Activated B cell treated with CpG ODN at 0.5 μM for 24 hours (primary cell): ENCODE measurements at regions of chr10 and their contacts with region 1.

Region 1: GRCh38 chr10:30433730-30434272 is at the start of gene MAP3K8:
- DNase-seq: peak; percentile 90
- ATAC-seq: peak; percentile 71
- H3K4me3 Mint-ChIP-seq: peak within 1 kb of the TSS; percentile 95
- H3K27ac Mint-ChIP-seq: peak within 1 kb of the TSS; percentile 94
- H3K4me1 Mint-ChIP-seq: peaks cover 71% of the 10 kb centered on the region
- H3K27me3 Mint-ChIP-seq: no peaks in the 10 kb centered on the region
- CTCF ChIP-seq: no peak
- total RNA-seq, gene MAP3K8: 141 and 160 TPM in 2 replicates

Region 2: GRCh38 chr10:30392564-30392990 is 41.2 kb before region 1 on chr10:
- CTCF ChIA-PET with region 1: interaction called, 4 read pairs
- POLR2A ChIA-PET with region 1: no interaction called
- intact Hi-C with region 1: loop called (anchors 2 kb)
- DNase-seq: peak; percentile 70
- ATAC-seq: peak; percentile 100
- H3K4me3 Mint-ChIP-seq: peak overlapping the region; percentile 20
- H3K27ac Mint-ChIP-seq: no peak overlapping the region
- H3K4me1 Mint-ChIP-seq: peaks cover 4% of the 10 kb centered on the region
- H3K27me3 Mint-ChIP-seq: peaks cover 7% of the 10 kb centered on the region
- CTCF ChIP-seq: peak; percentile 34

Region 3: GRCh38 chr10:30447125-30447799 is 13.5 kb after region 1 on chr10:
- CTCF ChIA-PET with region 1: interaction called, 4 read pairs
- POLR2A ChIA-PET with region 1: interaction called, 22 read pairs
- intact Hi-C with region 1: loop called (anchors 1 kb)
- DNase-seq: no peak
- ATAC-seq: peak; percentile 34
- H3K4me3 Mint-ChIP-seq: peak overlapping the region; percentile 24
- H3K27ac Mint-ChIP-seq: peak overlapping the region; percentile 59
- H3K4me1 Mint-ChIP-seq: peaks cover 59% of the 10 kb centered on the region
- H3K27me3 Mint-ChIP-seq: no peaks in the 10 kb centered on the region
- CTCF ChIP-seq: no peak

Region 4: GRCh38 chr10:30488316-30488715 is 54.5 kb after region 1 on chr10:
- CTCF ChIA-PET with region 1: interaction called, 5 read pairs
- POLR2A ChIA-PET with region 1: interaction called, 22 read pairs
- intact Hi-C with region 1: loop called (anchors 1 kb)
- DNase-seq: no peak
- ATAC-seq: peak; percentile 70
- H3K4me3 Mint-ChIP-seq: peak overlapping the region; percentile 66
- H3K27ac Mint-ChIP-seq: peak overlapping the region; percentile 89
- H3K4me1 Mint-ChIP-seq: peaks cover 63% of the 10 kb centered on the region
- H3K27me3 Mint-ChIP-seq: no peaks in the 10 kb centered on the region
- CTCF ChIP-seq: no peak

Region 5: GRCh38 chr10:30510169-30510930 is 76.5 kb after region 1 on chr10:
- CTCF ChIA-PET with region 1: interaction called, 3 read pairs
- POLR2A ChIA-PET with region 1: interaction called, 23 read pairs
- intact Hi-C with region 1: no loop called
- DNase-seq: no peak
- ATAC-seq: peak; percentile 96
- H3K4me3 Mint-ChIP-seq: peak overlapping the region; percentile 56
- H3K27ac Mint-ChIP-seq: peak overlapping the region; percentile 81
- H3K4me1 Mint-ChIP-seq: peaks cover 42% of the 10 kb centered on the region
- H3K27me3 Mint-ChIP-seq: no peaks in the 10 kb centered on the region
- CTCF ChIP-seq: no peak

Region 6: DNA sequence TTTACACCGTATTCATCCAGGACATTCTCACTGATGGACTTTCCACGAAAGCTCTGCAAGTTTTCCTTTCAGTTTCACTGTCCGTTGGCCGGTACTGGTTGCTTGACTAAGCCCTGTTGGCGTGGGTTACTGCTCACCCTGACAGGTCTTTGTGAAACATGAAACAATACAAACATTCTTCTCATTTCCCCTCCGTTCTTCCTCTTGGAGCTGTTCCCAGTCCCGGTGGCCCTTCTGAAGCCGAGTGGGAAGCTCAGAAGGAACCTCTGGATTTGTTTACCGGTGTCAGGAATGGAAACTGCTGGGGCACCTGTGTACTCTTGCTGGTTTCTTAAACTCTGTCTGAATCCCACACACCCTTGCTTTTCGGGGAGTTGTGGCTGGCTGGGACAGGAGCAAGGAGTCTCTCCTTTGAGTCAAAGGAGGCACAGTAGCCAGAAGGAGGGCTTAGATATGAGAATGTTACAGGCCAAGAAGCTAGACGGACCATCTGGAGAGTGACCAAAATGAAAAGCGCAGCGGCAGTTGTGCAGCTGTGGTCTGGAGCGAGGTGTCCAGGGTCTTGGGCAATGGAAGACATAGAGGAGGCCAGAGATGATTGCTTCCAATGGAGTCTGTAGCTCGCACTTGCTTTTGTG is 150.1 kb after region 1 on chr10:
- CTCF ChIA-PET with region 1: interaction called, 4 read pairs
- POLR2A ChIA-PET with region 1: interaction called, 3 read pairs
- intact Hi-C with region 1: loop called (anchors 1 kb)
- DNase-seq: no peak
- ATAC-seq: no peak
- H3K4me3 Mint-ChIP-seq: peak overlapping the region; percentile 67
- H3K27ac Mint-ChIP-seq: peak overlapping the region; percentile 31
- H3K4me1 Mint-ChIP-seq: peaks cover 49% of the 10 kb centered on the region
- H3K27me3 Mint-ChIP-seq: no peaks in the 10 kb centered on the region
- CTCF ChIP-seq: no peak

Region 7: DNA sequence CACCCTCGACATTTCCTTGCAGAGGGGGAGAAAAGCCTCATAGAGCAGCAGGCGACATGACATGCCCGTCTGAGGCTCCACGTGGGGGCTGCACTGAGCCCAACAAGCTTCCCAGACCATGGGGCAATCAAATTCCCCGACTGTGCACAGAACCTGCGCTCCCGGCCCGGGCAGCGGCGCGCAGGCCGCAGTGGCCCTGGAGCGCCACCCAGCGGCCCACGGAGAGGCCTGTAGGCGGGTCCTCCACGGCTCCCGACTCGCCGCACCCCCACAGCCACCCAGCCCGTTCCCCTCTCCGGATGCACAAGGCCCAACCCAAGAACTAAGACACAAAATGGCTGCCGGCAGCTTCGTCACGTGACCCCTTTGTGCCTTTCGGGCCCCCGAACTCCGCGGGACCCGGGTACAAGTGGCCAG is 1912.3 kb after region 1 on chr10:
- CTCF ChIA-PET with region 1: no interaction called
- POLR2A ChIA-PET with region 1: no interaction called
- intact Hi-C with region 1: loop called (anchors 1 kb)
- DNase-seq: peak; percentile 93
- ATAC-seq: peak; percentile 84
- H3K4me3 Mint-ChIP-seq: peak overlapping the region; percentile 96
- H3K27ac Mint-ChIP-seq: peak overlapping the region; percentile 100
- H3K4me1 Mint-ChIP-seq: peaks cover 72% of the 10 kb centered on the region
- H3K27me3 Mint-ChIP-seq: no peaks in the 10 kb centered on the region
- CTCF ChIP-seq: peak; percentile 67